GM12878 (cell line): ENCODE measurements at regions of chr17 and their contacts with region 1.

Region 1: GRCh38 chr17:7021993-7022778 is 664 bp upstream of the BCL6B start:
- DNase-seq: no peak
- ATAC-seq: peak; percentile 86
- H3K4me3 ChIP-seq: peak overlapping the region; percentile 40; the same call in 1 of the 2 replicates
- H3K27ac ChIP-seq: peak overlapping the region; percentile 18; the same call in 1 of the 2 replicates
- H3K4me1 ChIP-seq: peaks cover 25% of the 10 kb centered on the region
- H3K27me3 ChIP-seq: no peaks in the 10 kb centered on the region
- CTCF ChIP-seq: peak; percentile 93 to 96 (median 96)
- EP300 ChIP-seq: no peak
- POLR2A ChIP-seq: peak; percentile 31; the same call in 1 of the 2 replicates
- RAD21 ChIP-seq: peak; percentile 72

Region 2: GRCh38 chr17:6927290-6928126 is 94.7 kb before region 1 on chr17:
- CTCF ChIA-PET with region 1: interaction called, 10 read pairs
- POLR2A ChIA-PET with region 1: no interaction called
- RAD21 ChIA-PET with region 1: interaction called, 3 read pairs
- SMC1A ChIA-PET with region 1: interaction called, 4 read pairs
- in situ Hi-C with region 1: no loop called
- intact Hi-C with region 1: no loop called
- DNase-seq: no peak
- ATAC-seq: no peak
- H3K4me3 ChIP-seq: no peak overlapping the region
- H3K27ac ChIP-seq: no peak overlapping the region
- H3K4me1 ChIP-seq: no peaks in the 10 kb centered on the region
- H3K27me3 ChIP-seq: no peaks in the 10 kb centered on the region
- CTCF ChIP-seq: no peak
- EP300 ChIP-seq: no peak
- POLR2A ChIP-seq: no peak
- RAD21 ChIP-seq: no peak

Region 3: DNA sequence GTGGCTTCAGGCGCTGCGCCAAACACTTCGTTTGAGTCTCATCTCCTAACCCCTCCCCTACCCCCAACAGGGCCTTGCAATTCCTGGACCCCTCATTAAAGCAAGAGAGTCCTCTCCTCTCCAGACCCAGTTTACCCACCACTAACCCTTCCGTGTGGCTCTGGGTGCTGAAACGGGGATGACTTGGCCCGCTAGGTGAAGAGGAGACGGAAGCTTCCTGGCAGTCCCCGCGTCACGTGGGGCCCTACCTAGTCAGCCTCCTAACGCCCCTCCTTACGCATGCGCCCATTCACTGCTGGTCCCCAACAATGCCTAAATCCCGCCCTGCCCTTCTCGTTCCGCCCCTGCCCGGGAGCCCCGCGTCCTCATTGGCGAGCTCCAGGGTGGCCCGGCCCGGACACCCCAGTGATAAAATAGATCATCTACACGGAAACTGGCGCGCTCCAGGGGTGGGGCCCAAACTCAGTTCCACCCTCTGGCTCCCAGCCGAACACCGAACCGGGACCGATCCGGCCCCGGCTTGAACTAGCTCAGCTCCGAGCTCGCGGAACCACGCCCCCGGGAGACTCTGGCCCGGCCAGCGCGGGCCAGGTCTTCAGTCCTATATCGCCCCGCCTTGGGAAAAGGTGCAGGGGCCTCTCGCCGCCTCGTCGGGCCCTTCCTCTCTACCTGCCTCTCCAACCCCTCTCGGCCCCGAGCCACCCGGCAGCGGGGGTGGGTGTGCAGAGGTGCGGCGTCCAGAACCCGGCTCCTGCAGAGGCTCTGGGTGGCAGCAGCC is 13.6 kb after region 1 on chr17 and contains the start of gene SLC16A13:
- CTCF ChIA-PET with region 1: interaction called, 40 read pairs
- POLR2A ChIA-PET with region 1: interaction called, 39 read pairs
- RAD21 ChIA-PET with region 1: interaction called, 7 read pairs
- SMC1A ChIA-PET with region 1: interaction called, 8 read pairs
- in situ Hi-C with region 1: no loop called
- intact Hi-C with region 1: no loop called
- DNase-seq: peak; percentile 96
- ATAC-seq: peak; percentile 96
- H3K4me3 ChIP-seq: peak within 1 kb of the TSS; percentile 77
- H3K27ac ChIP-seq: peak within 1 kb of the TSS; percentile 99
- H3K4me1 ChIP-seq: peaks cover 10% of the 10 kb centered on the region
- H3K27me3 ChIP-seq: no peaks in the 10 kb centered on the region
- CTCF ChIP-seq: no peak
- EP300 ChIP-seq: peak in 1 of 2 experiments; percentile 27; a peak in 1 of 4 replicates
- POLR2A ChIP-seq: peak; percentile 95
- RAD21 ChIP-seq: no peak
- polyA plus RNA-seq, gene SLC16A13: 0.34 to 0.46 TPM

Region 4: DNA sequence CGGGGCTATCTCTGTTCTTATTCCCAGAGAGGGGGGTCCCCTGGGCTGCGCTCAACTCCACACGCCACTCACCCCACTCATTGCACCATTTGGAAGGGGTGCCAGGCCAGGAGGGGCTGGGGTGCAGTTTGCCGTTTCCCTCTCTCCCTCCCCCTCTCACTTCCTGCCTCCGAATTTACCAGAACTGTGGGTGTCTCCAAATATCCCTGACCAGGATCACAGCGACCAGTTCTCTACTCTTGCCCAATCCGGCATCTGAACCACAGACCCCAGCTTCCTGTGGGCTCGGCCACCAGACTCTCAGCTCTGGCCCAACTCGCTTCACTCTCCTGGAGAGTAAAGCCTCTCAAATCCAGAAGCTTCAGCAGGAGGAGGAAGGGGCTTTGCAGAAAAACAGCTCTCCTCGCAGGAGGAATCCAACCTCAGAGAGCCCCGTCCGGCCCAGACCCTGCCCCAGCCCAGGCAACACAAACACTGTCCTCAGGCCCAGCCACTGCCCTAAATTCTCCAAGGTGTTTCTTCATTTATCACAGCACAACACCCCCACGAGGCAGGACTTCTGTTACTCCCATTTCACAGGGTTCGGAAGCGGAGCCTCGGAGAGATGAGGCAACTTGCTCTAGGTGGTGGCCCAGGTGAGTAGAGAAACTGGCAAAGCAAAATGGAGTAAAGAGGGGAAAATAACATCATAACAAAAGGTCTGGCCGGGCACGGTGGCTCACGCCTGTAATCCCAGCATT is 92.9 kb after region 1 on chr17:
- CTCF ChIA-PET with region 1: no interaction called
- POLR2A ChIA-PET with region 1: no interaction called
- RAD21 ChIA-PET with region 1: no interaction called
- SMC1A ChIA-PET with region 1: no interaction called
- in situ Hi-C with region 1: no loop called
- intact Hi-C with region 1: no loop called
- DNase-seq: no peak
- ATAC-seq: no peak
- H3K4me3 ChIP-seq: no peak overlapping the region
- H3K27ac ChIP-seq: no peak overlapping the region
- H3K4me1 ChIP-seq: no peaks in the 10 kb centered on the region; the same call in 1 of the 2 replicates
- H3K27me3 ChIP-seq: no peaks in the 10 kb centered on the region
- CTCF ChIP-seq: no peak
- EP300 ChIP-seq: no peak
- POLR2A ChIP-seq: no peak
- RAD21 ChIP-seq: no peak